ENCODE measurements at regions of chr15 and their contacts with region 1.

Region 1: DNA sequence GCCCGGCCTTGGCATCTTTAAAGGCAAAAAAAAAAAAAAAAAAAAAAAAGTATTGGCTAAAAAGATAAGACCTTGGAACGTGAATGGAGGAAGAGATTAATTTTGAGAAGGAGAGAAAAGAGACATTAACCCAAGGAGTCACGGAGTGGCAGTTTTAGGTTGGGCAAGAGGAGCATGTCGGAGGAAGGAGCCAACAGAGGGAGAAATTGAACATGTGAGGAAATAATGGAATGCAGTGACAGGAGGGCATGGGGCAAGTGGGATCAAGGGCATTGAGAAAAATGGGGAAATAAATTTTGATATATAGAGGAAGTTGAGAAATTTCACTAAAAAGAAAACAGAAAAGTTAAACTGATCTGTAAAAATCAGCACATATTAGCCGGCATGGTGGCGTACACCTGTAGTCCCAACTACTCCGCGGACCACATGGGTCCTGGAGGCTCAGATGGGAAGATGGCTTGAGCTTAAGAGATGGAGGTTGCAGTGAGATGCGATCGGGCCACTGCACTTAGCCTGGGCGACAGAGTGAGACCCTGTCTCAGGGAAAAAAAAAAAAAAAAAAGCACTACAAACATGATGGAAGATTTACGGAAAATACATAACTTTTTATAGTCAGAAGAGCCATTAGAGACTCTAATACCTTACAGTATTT is 1.2 kb downstream of the HAUS2 start:
- DNase-seq: no peak
- ATAC-seq: no peak
- H3K4me3 ChIP-seq: peak overlapping the region; percentile 88
- H3K27ac ChIP-seq: peak overlapping the region; percentile 92
- H3K4me1 ChIP-seq: peaks cover 24% of the 10 kb centered on the region
- H3K27me3 ChIP-seq: no peaks in the 10 kb centered on the region
- CTCF ChIP-seq: no peak

Region 2: DNA sequence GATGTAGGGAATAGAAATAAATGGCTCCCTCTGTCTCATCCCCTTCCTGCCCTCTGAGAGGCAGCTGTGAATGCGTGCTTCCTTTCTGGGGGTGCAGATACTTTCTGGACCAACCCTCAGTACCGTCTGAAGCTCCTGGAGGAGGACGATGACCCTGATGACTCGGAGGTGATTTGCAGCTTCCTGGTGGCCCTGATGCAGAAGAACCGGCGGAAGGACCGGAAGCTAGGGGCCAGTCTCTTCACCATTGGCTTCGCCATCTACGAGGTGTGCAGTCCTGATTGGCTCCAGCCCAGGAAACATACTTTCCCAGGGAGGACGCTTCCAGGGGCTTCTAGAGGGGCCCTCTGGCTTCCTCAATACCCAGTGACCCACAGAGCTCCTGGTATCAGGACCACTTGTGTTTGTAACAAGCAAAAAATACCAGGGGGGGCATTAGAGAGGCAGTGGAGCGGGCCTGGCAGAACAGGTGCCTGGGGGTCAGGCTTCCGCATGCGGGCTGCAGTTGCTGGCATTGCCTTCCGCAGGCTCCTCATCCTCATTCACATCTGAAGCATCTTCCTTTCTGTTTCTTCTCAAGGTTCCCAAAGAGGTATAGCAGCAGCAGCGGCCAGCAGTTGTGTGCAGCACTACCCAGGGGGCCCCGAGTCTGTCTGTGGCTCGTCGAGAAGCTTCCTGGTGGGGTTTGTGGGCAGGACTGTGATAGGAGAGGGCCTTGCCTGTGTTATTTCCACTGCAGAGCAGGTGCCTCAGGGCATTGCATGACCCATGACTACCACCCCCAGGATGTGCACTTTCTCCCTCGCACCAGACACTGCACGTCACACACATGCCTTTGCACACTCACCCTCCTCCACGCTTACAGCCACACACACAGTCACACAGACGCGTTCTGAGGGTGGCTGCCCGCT is 148.1 kb before region 1 on chr15:
- intact Hi-C with region 1: no loop called
- DNase-seq: no peak
- ATAC-seq: no peak
- H3K4me3 ChIP-seq: no peak overlapping the region
- H3K27ac ChIP-seq: no peak overlapping the region
- H3K4me1 ChIP-seq: no peaks in the 10 kb centered on the region
- H3K27me3 ChIP-seq: no peaks in the 10 kb centered on the region
- CTCF ChIP-seq: no peak

Region 3: DNA sequence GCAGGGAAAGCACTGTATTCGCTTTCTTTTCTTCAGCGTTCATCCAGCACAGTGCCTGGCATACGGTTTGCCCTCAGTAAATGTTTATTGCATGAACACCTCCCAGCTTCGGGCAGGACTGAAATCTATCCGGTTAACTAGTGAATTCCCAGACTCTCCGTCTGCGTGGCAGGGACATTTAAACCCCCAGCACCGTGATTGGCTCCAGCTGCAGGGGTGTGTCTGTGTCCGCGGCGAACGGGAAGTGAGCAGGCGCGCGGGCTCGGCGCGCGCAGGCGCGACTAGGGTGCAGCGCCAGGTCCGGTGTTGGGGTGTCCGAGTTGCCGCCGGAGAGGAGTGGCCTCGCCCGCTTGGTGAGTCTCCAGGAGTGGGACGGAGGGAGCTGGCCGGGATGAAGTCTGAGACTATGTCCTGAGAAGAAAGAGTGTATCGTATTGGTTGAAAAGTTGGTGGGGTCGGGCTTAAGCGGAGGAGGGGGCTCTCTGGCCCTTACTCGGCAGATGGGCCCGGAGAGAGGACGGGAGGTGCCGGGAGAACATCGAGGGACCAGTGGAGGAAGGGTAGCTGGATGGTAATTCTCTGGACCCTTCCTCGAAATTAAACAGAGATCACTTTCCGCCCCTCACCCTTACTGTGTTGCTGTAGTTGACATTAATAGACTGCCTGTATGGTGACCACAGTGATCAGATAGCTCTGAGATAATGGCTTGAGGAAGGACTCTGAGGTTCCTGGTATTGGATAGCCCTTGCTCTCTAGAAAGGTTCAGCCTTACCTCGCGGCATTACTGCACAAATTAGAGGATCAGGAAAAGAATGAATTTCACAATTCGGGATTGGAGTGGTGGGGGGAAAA is 54.3 kb before region 1 on chr15 and contains the start of gene SNAP23:
- intact Hi-C with region 1: no loop called
- DNase-seq: peak; percentile 97
- ATAC-seq: peak; percentile 97
- H3K4me3 ChIP-seq: peak within 1 kb of the TSS; percentile 86
- H3K27ac ChIP-seq: peak within 1 kb of the TSS; percentile 96
- H3K4me1 ChIP-seq: peaks cover 67% of the 10 kb centered on the region
- H3K27me3 ChIP-seq: no peaks in the 10 kb centered on the region
- CTCF ChIP-seq: no peak
- total RNA-seq, gene SNAP23: 81.9 TPM

Region 4: DNA sequence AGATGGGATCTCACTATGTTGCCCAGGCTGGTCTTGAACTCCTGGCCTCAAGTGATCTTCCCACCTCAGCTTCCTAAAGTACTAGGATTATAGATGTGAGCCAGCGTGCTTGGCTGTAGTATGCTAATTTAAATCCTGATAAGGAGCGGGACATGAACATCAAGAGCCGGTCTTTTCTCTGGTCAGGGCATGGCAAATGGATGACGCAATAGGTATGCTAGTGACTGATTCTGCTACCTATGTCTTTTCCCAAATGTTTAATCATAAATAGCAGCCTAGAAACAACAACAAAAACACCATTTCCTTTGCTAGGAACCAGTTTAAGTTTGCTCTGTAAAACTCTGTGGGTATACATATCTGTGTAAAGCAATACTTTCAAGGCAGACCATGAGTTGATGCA is 90.2 kb after region 1 on chr15:
- intact Hi-C with region 1: loop called (anchors 10 kb)
- DNase-seq: no peak
- ATAC-seq: no peak
- H3K4me3 ChIP-seq: no peak overlapping the region
- H3K27ac ChIP-seq: no peak overlapping the region
- H3K4me1 ChIP-seq: no peaks in the 10 kb centered on the region
- H3K27me3 ChIP-seq: no peaks in the 10 kb centered on the region
- CTCF ChIP-seq: no peak

Measured in upper lobe of right lung (tissue), 1 donor.